Activated CD8-positive, alpha-beta T cell treated with anti-CD3 and anti-CD28 coated beads, Interleukin-2, amount 10 ng/mL, durations not matched to agents 7 days and 5 days (primary cell): ENCODE measurements at regions of chr11 and their contacts with region 1.

Region 1: DNA sequence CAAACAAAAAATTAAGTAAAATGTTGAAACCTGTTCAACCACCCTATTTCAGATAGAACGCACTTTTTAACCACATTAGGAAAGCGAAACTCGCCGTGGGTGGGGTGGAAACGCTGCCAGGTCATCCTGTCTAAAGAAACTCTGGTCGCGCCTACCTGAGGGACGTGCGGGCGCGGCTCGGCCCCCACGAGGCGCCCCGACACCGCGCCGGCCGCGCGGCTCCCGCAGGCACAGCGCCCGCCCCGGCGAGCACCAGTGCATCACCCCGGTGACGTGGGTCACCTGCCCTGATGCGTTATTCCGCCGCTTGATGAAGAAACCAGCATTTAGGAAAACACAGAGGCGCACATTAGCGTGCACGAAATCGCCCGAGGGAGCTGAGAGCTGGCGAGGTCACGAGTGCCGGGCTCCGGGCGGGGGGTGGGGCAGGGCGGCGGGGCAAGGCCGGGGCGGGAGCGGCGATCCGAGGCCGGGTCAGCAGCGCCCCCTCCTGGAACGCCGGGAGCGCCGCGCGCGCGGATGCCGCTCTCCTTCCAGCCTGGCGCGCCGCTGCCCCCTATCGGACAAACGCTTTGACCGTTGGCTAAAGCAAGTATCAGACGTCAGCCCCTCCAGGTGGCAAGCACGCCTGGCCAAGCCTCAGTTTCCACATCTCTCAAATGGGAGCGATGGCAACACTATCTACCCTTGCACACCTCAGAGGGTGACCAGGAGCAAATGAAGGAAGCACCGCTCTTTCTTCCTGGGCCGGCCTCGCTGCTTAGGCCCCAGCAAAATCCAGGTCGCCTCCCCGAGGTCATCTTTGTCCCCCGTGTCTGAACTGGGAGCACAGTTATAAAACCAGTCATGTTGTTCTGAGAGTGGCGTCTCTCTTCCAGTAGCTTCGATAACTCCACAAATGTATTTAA is 15.7 kb upstream of the SNX32 start:
- DNase-seq: peak; percentile 96
- ATAC-seq: peak; percentile 93
- H3K4me3 Mint-ChIP-seq: peak overlapping the region; percentile 76
- H3K27ac Mint-ChIP-seq: peak overlapping the region; percentile 75
- H3K4me1 Mint-ChIP-seq: peaks cover 20% of the 10 kb centered on the region
- H3K27me3 Mint-ChIP-seq: peaks cover 4% of the 10 kb centered on the region

Region 2: DNA sequence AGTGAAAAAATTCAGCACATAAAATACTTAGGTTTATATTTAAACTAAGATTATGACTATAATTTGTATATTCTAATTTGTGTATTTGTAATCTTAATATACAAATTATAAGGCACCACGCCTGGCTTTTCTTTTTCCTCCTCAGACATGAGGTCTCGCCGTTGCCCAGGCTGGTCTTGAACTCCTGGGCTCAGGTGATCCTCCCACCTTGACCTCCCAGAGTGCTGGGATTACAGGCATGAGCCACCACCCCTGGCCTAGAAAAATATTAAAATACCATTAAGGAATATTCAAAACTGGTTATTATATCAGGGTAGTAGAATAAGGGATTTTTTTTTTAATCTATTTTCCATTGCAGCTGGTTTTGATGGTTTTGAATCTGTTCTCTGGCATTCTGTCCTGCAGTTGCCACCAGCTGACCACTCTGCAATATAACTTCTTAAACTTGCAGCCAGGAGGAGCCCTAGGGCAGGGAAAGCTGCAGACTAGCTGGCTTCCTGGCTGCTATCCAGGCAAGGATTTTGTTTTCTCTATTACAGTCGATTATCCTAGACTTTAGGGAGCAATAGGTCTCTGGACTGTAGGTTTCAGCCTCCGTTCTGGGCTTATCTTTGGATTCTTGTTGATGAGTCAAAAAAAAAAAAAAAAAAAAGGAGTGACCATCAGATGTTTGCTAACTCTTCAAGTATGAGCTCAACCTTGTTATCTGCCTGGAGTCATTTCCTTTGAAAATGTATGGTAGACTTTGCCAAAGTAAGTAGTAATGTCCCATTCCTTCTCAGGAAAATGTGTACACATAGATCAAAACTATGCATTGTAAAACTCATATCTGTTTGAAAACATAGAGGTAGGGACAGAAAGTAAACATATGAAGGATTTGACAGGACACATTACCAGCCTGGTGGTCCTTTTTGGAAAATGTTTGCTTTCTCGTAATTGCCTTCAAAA is 543.1 kb before region 1 on chr11:
- CTCF ChIA-PET with region 1: no interaction called
- POLR2A ChIA-PET with region 1: no interaction called
- DNase-seq: peak; percentile 42
- ATAC-seq: no peak
- H3K4me3 Mint-ChIP-seq: no peak overlapping the region
- H3K27ac Mint-ChIP-seq: no peak overlapping the region
- H3K4me1 Mint-ChIP-seq: peaks cover 12% of the 10 kb centered on the region
- H3K27me3 Mint-ChIP-seq: no peaks in the 10 kb centered on the region

Region 3: DNA sequence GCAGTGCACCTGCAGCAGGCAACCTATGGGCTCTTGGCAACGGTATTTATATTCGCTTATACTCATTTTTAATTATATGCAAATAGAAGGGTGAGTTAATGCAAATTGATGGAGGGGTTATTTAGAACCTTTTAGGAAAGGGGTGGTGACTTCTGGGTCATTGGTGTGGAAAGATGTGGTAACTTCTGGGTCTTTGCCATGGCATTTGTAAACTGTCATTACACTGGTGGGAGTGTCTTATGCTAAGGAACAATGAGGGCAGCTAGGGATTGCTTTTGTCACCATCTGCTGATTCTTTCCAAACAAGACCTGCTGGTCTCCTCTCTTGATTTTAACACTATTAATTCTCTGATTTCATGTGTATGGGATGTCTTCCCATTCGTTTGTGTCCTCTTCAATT is 117.7 kb before region 1 on chr11:
- CTCF ChIA-PET with region 1: interaction called, 14 read pairs
- POLR2A ChIA-PET with region 1: no interaction called
- DNase-seq: no peak
- ATAC-seq: no peak
- H3K4me3 Mint-ChIP-seq: no peak overlapping the region
- H3K27ac Mint-ChIP-seq: no peak overlapping the region
- H3K4me1 Mint-ChIP-seq: no peaks in the 10 kb centered on the region
- H3K27me3 Mint-ChIP-seq: peaks cover 21% of the 10 kb centered on the region

Region 4: DNA sequence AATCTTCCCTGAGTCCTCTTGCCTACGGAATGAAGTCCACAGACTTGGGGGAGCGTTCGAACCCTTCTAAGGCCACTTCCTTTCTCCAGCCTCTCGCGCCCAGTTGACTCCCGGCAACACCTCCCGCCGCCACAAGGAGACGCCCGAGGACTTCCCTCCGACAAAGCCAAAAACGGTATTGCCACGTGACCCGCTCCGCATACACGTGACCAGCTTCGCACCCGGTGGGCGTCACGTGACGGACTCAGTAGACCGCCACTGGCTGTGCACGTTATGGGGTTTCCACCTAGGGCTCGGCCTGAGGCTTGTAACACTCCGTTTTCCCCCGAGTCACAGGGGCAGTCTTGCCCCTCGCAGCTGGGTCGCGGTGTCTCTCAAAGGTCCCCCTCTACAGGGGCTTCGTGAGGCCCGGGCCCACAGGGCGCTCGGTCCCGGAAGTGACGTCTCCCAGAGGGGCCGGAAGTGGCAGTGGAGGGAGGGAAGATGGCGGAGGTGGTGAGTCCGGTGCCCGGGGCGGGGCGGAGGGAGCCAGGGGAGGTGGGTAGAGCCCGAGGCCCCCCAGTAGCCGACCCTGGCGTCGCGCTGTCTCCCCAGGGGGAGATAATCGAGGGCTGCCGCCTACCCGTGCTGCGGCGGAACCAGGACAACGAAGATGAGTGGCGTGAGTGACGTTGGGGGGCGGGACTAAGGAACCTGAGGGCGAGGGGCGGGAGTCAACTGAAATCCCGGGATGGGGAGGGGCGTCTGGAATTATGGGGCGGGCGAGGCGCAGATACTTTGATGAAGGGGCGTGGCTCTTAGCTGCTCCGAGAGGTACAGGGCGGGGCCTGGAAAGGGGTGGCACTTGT is 106.1 kb before region 1 on chr11 and contains the start of gene KAT5:
- CTCF ChIA-PET with region 1: interaction called, 47 read pairs
- POLR2A ChIA-PET with region 1: interaction called, 8 read pairs
- DNase-seq: peak; percentile 99
- ATAC-seq: peak; percentile 86
- H3K4me3 Mint-ChIP-seq: peak within 1 kb of the TSS; percentile 85
- H3K27ac Mint-ChIP-seq: peak within 1 kb of the TSS; percentile 99
- H3K4me1 Mint-ChIP-seq: peaks cover 30% of the 10 kb centered on the region
- H3K27me3 Mint-ChIP-seq: no peaks in the 10 kb centered on the region
- total RNA-seq, gene KAT5: 63.2 to 68.7 TPM

Region 5: GRCh38 chr11:65766535-65766934 is 51.6 kb before region 1 on chr11:
- CTCF ChIA-PET with region 1: interaction called, 13 read pairs
- POLR2A ChIA-PET with region 1: no interaction called
- DNase-seq: peak; percentile 9
- ATAC-seq: no peak
- H3K4me3 Mint-ChIP-seq: no peak overlapping the region
- H3K27ac Mint-ChIP-seq: no peak overlapping the region
- H3K4me1 Mint-ChIP-seq: peaks cover 6% of the 10 kb centered on the region
- H3K27me3 Mint-ChIP-seq: peaks cover 1% of the 10 kb centered on the region

Region 6: GRCh38 chr11:65786001-65786785 is 31.9 kb before region 1 on chr11:
- CTCF ChIA-PET with region 1: interaction called, 210 read pairs
- POLR2A ChIA-PET with region 1: no interaction called
- DNase-seq: no peak
- ATAC-seq: no peak
- H3K4me3 Mint-ChIP-seq: no peak overlapping the region
- H3K27ac Mint-ChIP-seq: no peak overlapping the region
- H3K4me1 Mint-ChIP-seq: peaks cover 36% of the 10 kb centered on the region
- H3K27me3 Mint-ChIP-seq: peaks cover 49% of the 10 kb centered on the region

Region 7: DNA sequence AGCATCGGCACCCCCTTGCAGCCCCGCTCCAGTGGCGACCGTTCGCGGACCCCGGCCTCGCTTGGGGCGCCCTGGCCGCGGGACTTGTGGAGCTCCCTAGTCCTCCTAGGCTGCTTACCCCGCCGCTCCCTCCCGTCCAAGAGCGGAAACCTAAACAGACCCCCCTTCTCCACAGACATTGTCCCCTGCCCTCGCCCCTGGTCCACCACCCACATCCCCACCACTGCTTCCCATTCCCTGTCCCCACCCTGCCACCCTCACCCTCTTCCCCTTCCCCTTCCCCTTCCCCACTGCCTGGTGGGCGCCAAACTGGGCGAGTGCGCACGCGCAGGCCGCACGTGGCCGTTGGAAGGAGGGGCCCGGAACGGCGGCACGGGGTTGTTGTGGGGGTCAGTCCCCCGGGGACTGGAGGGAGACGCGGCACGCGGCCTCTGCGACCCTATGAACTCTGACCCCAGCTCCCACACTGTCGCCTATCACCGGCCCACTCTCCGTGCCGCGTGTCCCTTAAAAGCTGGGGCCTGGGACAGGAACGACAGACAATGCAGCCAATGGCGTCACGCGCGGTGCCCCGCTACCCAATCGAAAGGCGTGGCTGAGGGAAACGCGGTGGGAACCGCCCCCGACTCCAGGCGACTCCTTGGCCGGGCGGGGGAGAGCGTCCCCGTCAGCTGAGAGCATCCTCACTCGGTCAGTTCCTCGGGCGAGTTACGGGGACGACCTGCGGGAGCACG is 15.4 kb after region 1 on chr11 and contains the start of gene SNX32:
- CTCF ChIA-PET with region 1: interaction called, 36 read pairs
- POLR2A ChIA-PET with region 1: no interaction called
- DNase-seq: peak; percentile 97
- ATAC-seq: peak; percentile 100
- H3K4me3 Mint-ChIP-seq: no peak within 1 kb of the TSS
- H3K27ac Mint-ChIP-seq: peak within 1 kb of the TSS; percentile 53
- H3K4me1 Mint-ChIP-seq: peaks cover 9% of the 10 kb centered on the region
- H3K27me3 Mint-ChIP-seq: peaks cover 24% of the 10 kb centered on the region
- total RNA-seq, gene SNX32: 0.44 to 1.6 TPM

Region 8: GRCh38 chr11:65850831-65851811 is 33.0 kb after region 1 on chr11:
- CTCF ChIA-PET with region 1: no interaction called
- POLR2A ChIA-PET with region 1: no interaction called
- DNase-seq: peak; percentile 54
- ATAC-seq: peak; percentile 20
- H3K4me3 Mint-ChIP-seq: no peak overlapping the region
- H3K27ac Mint-ChIP-seq: no peak overlapping the region
- H3K4me1 Mint-ChIP-seq: peaks cover 29% of the 10 kb centered on the region
- H3K27me3 Mint-ChIP-seq: no peaks in the 10 kb centered on the region